HEK293 (cell line): ENCODE measurements at regions of chr19 and their contacts with region 1.

Region 1: DNA sequence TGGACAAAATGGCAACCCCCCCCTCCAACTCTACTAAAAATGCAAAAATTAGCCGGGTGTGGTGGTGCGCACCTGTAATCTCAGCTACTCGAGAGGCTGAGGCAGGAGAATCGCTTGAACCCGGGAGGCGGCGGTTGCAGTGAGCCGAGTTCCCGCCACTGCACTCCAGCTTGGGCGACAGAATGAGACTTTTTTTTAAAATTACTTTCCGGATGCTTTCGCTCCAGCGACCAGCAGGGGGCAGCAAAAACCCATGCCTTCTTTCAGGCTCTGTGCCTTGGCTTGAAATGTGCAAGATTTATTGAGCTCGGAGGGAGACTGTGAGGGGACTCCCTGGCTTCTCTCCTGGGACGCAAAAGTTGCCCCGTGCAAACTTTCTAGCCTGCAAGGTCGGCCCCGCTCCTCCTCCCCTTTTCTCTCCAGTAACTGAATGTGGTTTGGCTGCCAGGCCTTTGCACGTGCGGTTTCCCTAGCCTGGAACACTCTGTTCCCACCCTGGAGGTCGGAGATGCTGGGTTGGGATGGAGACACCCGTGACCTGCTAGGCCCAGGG is 61.4 kb upstream of the NFIC start:
- H3K4me3 ChIP-seq: no peak overlapping the region
- H3K27ac ChIP-seq: no peak overlapping the region
- H3K4me1 ChIP-seq: no peaks in the 10 kb centered on the region
- CTCF ChIP-seq: peak; percentile 71; the same call in 1 of the 2 replicates

Region 2: DNA sequence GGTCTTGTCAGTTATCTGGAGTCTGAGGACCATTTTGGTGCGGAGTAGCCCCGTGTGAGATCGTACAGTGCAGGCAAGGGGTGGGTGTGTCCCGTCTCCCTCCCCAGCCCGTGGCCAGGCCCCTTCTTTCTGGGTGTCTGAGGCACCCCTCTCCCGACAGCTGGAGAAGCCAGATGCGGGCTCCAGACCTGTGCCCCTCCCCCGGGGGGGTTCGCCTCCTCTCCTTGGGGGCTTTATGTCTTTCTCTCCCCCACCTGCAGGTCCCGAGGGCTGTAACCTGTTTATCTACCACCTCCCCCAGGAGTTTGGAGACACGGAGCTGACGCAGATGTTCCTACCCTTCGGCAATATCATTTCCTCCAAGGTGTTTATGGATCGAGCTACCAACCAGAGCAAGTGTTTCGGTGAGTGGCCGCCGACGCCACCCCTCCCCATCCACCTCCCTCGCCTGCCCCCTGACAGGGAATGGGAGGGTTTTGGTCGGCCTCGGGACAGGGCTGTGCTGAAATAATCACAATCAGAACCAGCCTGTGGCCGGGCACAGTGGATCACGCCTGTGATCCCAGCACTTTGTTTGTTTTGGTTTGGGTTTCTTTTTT is 14.9 kb before region 1 on chr19:
- CTCF ChIA-PET with region 1: interaction called, 13 read pairs
- POLR2A ChIA-PET with region 1: interaction called, 5 read pairs
- H3K4me3 ChIP-seq: no peak overlapping the region; the same call in 1 of the 2 replicates
- H3K27ac ChIP-seq: no peak overlapping the region
- H3K4me1 ChIP-seq: no peaks in the 10 kb centered on the region
- CTCF ChIP-seq: no peak

Region 3: DNA sequence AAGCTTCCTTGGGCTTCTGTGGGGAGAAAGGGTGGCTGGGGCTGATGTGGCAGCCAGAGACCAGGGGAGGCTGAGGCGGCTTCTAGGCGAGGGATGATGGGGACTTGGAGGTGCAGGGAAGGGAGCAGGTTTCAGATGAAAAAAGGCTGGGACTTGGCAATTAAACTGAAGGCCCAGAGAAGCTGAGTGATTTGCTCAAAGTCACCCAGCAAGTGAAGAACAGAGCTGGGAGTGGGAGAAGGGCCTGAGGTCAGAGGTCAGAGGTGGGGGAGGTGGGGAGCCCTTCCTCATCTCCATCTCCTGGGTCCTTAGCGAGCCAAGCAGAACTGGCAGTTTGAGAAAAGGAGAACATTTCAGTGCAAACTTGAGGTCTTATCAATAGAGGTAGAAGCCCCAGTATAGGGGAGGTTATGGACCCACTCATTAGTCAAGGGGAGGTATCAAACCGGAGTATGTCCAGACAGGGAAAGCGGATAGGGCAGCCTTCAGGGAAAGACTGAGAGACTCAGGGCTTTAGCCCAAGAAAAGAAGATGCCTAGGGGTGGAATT is 11.8 kb after region 1 on chr19:
- CTCF ChIA-PET with region 1: interaction called, 10 read pairs
- POLR2A ChIA-PET with region 1: no interaction called
- H3K4me3 ChIP-seq: no peak overlapping the region
- H3K27ac ChIP-seq: no peak overlapping the region
- H3K4me1 ChIP-seq: no peaks in the 10 kb centered on the region
- CTCF ChIP-seq: no peak

Region 4: GRCh38 chr19:3324321-3324856 is 19.4 kb after region 1 on chr19:
- CTCF ChIA-PET with region 1: interaction called, 10 read pairs
- POLR2A ChIA-PET with region 1: no interaction called
- H3K4me3 ChIP-seq: no peak overlapping the region
- H3K27ac ChIP-seq: no peak overlapping the region
- H3K4me1 ChIP-seq: no peaks in the 10 kb centered on the region
- CTCF ChIP-seq: peak; percentile 84

Region 5: DNA sequence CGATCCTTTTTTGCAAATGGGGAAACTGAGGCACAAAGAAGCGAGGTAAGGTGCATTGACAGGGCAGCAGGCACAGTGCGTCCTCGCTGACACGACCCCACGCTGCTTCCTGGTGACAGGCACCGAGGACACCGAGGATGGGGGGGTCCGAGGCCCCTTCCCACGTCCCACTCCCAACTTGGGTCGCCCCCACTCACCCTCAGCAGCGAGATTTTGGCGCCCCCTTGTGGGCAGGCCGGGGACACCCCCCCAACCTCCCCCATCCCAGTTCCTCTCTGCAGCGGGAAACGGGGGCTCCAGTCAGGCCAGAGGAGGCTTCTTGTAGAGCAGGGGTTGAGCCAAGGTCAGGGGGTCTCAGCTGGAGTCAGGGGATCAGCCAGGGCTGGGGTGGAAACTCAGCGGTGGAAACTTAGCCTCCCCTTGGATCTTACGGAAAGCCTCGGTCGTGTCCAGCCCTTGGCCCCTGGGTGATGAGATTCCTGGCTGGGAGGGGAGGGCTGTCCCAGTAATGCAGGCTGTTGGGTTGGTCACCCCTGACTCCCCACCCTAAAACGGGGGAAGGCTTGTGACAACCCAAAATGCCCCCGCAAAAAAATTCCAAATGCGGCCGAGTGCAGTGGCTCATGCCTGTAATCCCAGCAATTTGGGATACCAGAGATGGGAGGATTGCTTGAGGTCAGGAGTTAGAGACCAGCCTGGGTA is 167.2 kb after region 1 on chr19:
- CTCF ChIA-PET with region 1: interaction called, 72 read pairs
- POLR2A ChIA-PET with region 1: interaction called, 3 read pairs
- H3K4me3 ChIP-seq: no peak overlapping the region
- H3K27ac ChIP-seq: no peak overlapping the region
- H3K4me1 ChIP-seq: no peaks in the 10 kb centered on the region
- CTCF ChIP-seq: peak; percentile 79

Region 6: DNA sequence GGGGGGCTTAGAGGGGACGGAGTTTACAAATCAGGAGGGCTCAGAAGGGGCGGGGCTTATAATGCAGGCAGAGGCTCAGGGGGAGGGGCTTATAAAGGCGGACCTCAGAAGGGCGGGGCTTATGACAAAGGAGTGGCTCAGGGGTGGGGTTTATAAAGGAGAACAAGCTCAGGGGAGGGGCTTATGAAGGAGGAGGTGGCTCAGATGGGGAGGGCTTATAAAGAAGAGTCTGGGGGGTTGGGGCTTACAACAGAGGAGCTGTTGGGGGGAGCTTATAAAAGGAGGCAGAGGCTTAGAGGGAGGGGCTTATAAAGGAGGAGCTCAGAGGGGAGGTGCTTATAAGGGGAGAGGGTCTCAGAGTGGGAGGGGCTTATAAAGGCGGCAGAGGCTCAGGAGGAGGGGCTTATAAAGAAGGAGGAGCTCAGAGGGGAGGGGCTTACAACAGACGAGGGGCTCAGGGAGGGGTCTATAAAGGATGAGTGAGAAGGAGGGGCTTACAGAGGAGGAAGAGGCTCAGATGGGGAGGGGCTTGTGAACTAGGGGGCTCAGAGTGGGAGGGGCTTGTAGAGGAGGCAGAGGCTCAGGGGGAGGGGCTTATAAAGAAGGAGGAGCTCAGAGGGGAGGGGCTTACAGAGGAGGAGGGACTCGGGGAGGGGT is 174.4 kb after region 1 on chr19:
- CTCF ChIA-PET with region 1: interaction called, 72 read pairs
- POLR2A ChIA-PET with region 1: interaction called, 3 read pairs
- H3K4me3 ChIP-seq: no peak overlapping the region
- H3K27ac ChIP-seq: no peak overlapping the region
- H3K4me1 ChIP-seq: no peaks in the 10 kb centered on the region
- CTCF ChIP-seq: no peak